CD4-positive, alpha-beta T cell (primary cell): ENCODE measurements at regions of chr17 and their contacts with region 1.

Region 1: GRCh38 chr17:63773381-63774140 is at the start of gene CCDC47:
- DNase-seq: peak; percentile 94 to 100 (median 98)
- ATAC-seq: peak; percentile 80
- H3K4me3 ChIP-seq: peak within 1 kb of the TSS; percentile 67
- H3K4me3 Mint-ChIP-seq: peak within 1 kb of the TSS; percentile 99
- H3K27ac ChIP-seq: peak within 1 kb of the TSS; percentile 94 to 98
- H3K27ac Mint-ChIP-seq: peak within 1 kb of the TSS; percentile 97
- H3K4me1 ChIP-seq: peaks cover 58% of the 10 kb centered on the region
- H3K4me1 Mint-ChIP-seq: peaks cover 71% of the 10 kb centered on the region
- H3K27me3 ChIP-seq: no peaks in the 10 kb centered on the region
- H3K27me3 Mint-ChIP-seq: no peaks in the 10 kb centered on the region
- CTCF ChIP-seq: no peak
- total RNA-seq, gene CCDC47: 31.0 to 31.3 TPM

Region 2: DNA sequence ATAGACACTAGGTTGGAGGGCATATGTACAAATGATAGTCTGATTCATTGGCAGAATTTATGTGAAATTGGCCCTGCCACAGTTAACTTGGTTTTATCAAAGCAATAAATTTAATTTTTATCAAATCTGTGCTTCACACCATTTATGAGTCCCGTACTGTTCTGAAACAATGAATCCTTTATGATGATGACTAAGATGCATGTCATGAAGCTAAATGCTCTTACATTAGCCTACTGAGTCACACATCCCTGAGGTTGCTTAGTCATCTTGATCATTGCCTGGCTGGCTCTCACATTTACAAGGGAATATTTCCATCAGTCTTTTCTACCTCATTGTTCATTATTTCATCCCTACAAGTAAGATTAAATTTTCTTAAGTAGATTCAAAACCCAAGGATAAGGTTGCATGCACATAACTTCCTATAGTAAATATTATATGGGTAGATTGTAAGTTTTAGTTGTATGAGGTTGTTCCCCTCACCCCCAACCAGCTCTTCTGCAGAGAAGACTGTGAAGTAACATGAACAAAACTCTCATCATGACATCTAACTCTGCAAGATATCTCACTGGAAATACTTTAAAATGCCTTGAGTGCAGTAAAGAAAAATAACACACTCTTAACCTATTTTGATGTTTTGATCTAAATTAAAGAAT is 498.1 kb before region 1 on chr17:
- CTCF ChIA-PET with region 1: no interaction called
- POLR2A ChIA-PET with region 1: no interaction called
- intact Hi-C with region 1: no loop called
- DNase-seq: peak in 2 of 14 experiments; percentile 51 to 61
- ATAC-seq: no peak
- H3K4me3 ChIP-seq: no peak overlapping the region
- H3K4me3 Mint-ChIP-seq: no peak overlapping the region
- H3K27ac ChIP-seq: no peak overlapping the region
- H3K27ac Mint-ChIP-seq: no peak overlapping the region
- H3K4me1 ChIP-seq: no peaks in the 10 kb centered on the region
- H3K4me1 Mint-ChIP-seq: no peaks in the 10 kb centered on the region
- H3K27me3 ChIP-seq: no peaks in the 10 kb centered on the region
- H3K27me3 Mint-ChIP-seq: no peaks in the 10 kb centered on the region
- CTCF ChIP-seq: no peak

Region 3: DNA sequence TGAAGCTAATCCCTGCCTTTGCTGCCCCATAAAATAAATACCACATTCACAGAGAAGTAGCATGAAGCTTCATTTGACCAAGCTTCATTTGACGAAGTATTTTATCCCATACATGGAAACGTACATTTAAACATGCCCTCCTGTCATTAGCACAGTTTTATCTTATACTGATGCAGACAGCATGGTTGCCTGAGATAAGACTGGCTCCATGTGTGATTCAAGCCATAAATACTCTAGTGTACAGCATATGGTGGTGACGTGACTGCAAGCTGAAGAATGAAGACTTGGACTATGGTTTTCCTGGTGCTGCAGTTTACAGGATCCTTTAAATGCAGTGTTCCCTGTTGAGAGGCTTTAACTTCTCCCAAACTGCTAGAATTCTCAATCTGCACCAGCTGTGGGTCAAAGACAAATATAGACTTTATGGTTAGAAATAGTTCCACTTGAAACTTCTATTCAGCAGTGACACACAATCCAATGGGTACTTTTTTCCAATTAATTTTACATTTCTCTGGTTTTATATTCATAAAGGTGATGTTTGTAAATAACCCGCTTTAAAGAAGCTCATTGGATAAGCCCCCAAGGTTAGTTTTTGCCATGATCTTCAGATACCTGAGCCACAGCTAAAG is 392.3 kb before region 1 on chr17:
- CTCF ChIA-PET with region 1: no interaction called
- POLR2A ChIA-PET with region 1: no interaction called
- intact Hi-C with region 1: no loop called
- DNase-seq: no peak
- ATAC-seq: no peak
- H3K4me3 ChIP-seq: no peak overlapping the region
- H3K4me3 Mint-ChIP-seq: no peak overlapping the region
- H3K27ac ChIP-seq: no peak overlapping the region
- H3K27ac Mint-ChIP-seq: no peak overlapping the region
- H3K4me1 ChIP-seq: no peaks in the 10 kb centered on the region
- H3K4me1 Mint-ChIP-seq: no peaks in the 10 kb centered on the region
- H3K27me3 ChIP-seq: no peaks in the 10 kb centered on the region
- H3K27me3 Mint-ChIP-seq: no peaks in the 10 kb centered on the region
- CTCF ChIP-seq: no peak

Region 4: DNA sequence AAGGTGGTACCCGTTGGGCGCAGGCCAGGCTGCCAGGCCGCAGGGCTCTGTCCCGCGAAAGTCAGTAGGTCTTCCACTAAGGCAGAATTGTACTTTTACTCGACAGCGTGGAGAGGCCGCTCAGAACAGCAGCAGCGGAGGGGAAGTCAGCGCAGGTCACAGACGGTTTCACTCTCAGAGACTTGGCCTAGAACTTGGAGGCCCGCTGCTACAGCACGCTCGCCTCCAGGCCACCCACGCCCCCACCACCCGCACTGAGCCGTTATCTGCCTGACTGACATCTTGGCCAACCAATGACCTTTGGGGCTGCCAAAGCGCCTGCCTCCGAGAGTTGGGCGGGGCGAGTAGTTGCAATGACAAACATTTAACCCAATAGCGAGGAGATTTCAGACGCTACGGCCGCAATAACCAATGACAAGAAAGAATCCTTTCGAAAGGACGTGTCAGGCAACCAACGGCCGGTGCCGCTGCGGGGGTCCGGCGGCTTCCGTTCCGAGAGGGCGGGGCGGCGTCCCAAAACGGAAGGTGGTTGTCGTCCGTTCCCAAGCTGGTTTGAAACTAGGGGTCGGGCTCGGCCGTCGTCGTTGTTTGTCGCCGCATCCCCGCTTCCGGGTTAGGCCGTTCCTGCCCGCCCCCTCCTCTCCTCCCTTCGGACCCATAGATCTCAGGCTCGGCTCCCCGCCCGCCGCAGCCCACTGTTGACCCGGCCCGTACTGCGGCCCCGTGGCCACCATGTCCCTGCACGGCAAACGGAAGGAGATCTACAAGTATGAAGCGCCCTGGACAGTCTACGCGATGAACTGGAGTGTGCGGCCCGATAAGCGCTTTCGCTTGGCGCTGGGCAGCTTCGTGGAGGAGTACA is 223.4 kb before region 1 on chr17 and contains the start of gene DCAF7:
- CTCF ChIA-PET with region 1: no interaction called
- POLR2A ChIA-PET with region 1: interaction called, 4 read pairs
- intact Hi-C with region 1: loop called in 1 of 2 experiments (anchors 5 kb)
- DNase-seq: peak; percentile 97 to 100 (median 99)
- ATAC-seq: peak; percentile 95
- H3K4me3 ChIP-seq: peak within 1 kb of the TSS; percentile 89
- H3K4me3 Mint-ChIP-seq: peak within 1 kb of the TSS; percentile 98
- H3K27ac ChIP-seq: peak within 1 kb of the TSS; percentile 90 to 91
- H3K27ac Mint-ChIP-seq: peak within 1 kb of the TSS; percentile 88
- H3K4me1 ChIP-seq: peaks cover 38% of the 10 kb centered on the region
- H3K4me1 Mint-ChIP-seq: peaks cover 52% of the 10 kb centered on the region
- H3K27me3 ChIP-seq: no peaks in the 10 kb centered on the region
- H3K27me3 Mint-ChIP-seq: no peaks in the 10 kb centered on the region
- CTCF ChIP-seq: no peak
- total RNA-seq, gene DCAF7: 11.3 to 11.9 TPM

Region 5: GRCh38 chr17:63741221-63742049 is 32.1 kb before region 1 on chr17 and contains the start of gene STRADA:
- CTCF ChIA-PET with region 1: no interaction called
- POLR2A ChIA-PET with region 1: interaction called, 124 read pairs
- intact Hi-C with region 1: loop called (anchors 1 to 2 kb)
- DNase-seq: peak; percentile 98 to 100 (median 99)
- ATAC-seq: peak; percentile 88
- H3K4me3 ChIP-seq: peak within 1 kb of the TSS; percentile 95
- H3K4me3 Mint-ChIP-seq: peak within 1 kb of the TSS; percentile 93
- H3K27ac ChIP-seq: peak within 1 kb of the TSS; percentile 94
- H3K27ac Mint-ChIP-seq: peak within 1 kb of the TSS; percentile 91
- H3K4me1 ChIP-seq: peaks cover 33% of the 10 kb centered on the region
- H3K4me1 Mint-ChIP-seq: peaks cover 24% of the 10 kb centered on the region
- H3K27me3 ChIP-seq: no peaks in the 10 kb centered on the region
- H3K27me3 Mint-ChIP-seq: no peaks in the 10 kb centered on the region
- CTCF ChIP-seq: no peak
- total RNA-seq, gene STRADA: 50.9 to 51.0 TPM

Region 6: DNA sequence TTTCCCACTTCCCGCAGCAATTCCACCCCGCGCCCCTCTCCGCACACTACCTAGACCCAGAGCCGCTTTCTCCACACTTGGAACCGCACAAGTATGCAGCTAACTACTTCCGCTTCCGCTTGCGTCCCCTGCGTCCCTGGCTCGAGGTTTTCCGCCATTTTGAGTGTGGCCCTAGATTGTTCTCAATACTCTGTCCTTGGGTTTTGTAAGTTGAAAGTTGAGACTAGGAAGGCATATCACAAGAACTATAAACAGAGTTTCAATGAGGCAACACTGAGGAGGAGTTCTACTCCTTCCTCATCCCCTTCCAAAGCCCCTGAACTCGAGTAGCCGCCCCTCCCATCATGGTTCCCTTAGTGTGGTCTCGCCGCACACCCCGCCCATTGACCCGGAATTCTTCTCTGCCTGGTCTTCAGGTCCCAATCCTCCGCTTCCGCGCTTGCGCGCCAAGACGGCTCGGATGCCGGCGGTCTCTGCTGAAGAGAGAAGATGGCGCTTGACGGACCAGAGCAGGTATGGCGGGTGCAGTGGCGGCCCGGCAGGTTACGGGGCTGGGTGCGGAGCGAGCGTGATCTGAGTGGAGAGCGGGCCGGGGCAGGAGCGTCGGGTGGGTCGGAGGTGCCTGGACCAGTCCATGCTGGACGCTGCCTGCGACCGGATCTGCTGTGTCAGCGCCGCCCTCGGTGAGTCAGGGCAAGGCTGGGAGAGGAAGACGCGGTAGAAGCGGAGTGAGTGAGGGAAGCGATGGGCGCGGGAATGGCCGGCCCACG is 53.6 kb after region 1 on chr17 and contains the starts of genes FTSJ3 and PSMC5:
- CTCF ChIA-PET with region 1: interaction called, 3 read pairs
- POLR2A ChIA-PET with region 1: interaction called, 45 read pairs
- intact Hi-C with region 1: loop called (anchors 1 kb)
- DNase-seq: peak; percentile 91 to 98 (median 95)
- ATAC-seq: peak; percentile 93
- H3K4me3 ChIP-seq: peak within 1 kb of the TSS; percentile 83
- H3K4me3 Mint-ChIP-seq: peak within 1 kb of the TSS; percentile 94
- H3K27ac ChIP-seq: peak within 1 kb of the TSS; percentile 77 to 96
- H3K27ac Mint-ChIP-seq: peak within 1 kb of the TSS; percentile 96
- H3K4me1 ChIP-seq: peaks cover 69% of the 10 kb centered on the region
- H3K4me1 Mint-ChIP-seq: peaks cover 75% of the 10 kb centered on the region
- H3K27me3 ChIP-seq: no peaks in the 10 kb centered on the region
- H3K27me3 Mint-ChIP-seq: no peaks in the 10 kb centered on the region
- CTCF ChIP-seq: peak; percentile 65
- total RNA-seq, gene FTSJ3: 47.6 to 51.1 TPM
- total RNA-seq, gene PSMC5: 83.1 to 84.6 TPM

Region 7: DNA sequence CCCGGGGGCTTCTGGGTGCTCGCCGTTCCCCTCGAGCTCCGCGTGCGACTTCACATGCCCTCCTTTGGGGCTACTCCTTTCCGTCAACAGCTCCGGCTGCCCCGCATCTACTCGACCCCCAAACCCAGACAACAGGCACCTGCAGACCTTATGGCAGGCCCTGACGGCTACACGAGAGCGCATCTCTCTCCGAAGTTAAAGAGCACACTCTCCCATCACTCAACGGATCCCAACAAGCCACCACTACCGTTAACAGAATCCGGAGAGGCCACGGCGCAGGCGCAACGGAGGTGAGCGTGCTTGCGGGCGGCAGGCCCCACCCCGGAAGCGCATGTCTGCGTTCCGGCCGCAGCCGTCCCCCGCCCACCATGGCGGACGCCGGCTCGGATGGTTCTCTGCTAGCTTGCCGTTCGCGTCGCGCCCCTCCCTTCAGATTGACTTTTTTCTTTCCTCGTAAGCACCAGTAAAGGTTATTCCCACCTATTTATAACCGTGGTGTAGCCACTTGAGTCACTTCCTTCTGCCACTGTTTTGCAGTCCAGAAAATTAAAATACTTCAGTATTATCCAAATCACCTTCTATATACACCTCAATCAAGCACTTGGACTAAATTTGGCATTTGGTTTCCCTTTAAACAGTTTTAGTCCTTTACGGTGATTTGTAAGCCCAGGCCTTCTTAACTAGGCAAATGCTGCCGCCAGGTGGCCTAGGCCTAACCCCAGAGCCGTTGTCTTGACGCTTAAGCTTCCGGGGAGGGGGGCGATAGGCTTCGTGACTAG is 723.4 kb after region 1 on chr17 and contains the start of gene POLG2:
- CTCF ChIA-PET with region 1: no interaction called
- POLR2A ChIA-PET with region 1: no interaction called
- intact Hi-C with region 1: loop called in 1 of 2 experiments (anchors 10 kb)
- DNase-seq: peak; percentile 93 to 99 (median 95)
- ATAC-seq: peak; percentile 77
- H3K4me3 ChIP-seq: peak within 1 kb of the TSS; percentile 77
- H3K4me3 Mint-ChIP-seq: peak within 1 kb of the TSS; percentile 100
- H3K27ac ChIP-seq: peak within 1 kb of the TSS; percentile 85 to 91
- H3K27ac Mint-ChIP-seq: peak within 1 kb of the TSS; percentile 99
- H3K4me1 ChIP-seq: peaks cover 44% of the 10 kb centered on the region
- H3K4me1 Mint-ChIP-seq: peaks cover 83% of the 10 kb centered on the region
- H3K27me3 ChIP-seq: no peaks in the 10 kb centered on the region
- H3K27me3 Mint-ChIP-seq: no peaks in the 10 kb centered on the region
- CTCF ChIP-seq: peak; percentile 56
- total RNA-seq, gene POLG2: 32.8 to 34.1 TPM